SK-N-SH (cell line): ENCODE measurements at regions of chr13 and their contacts with region 1.

Region 1: GRCh38 chr13:52968074-52968700 is 60.4 kb upstream of the OLFM4 start:
- DNase-seq: peak; percentile 71
- H3K4me3 ChIP-seq: no peak overlapping the region; a peak in 1 of 4 replicates
- H3K27ac ChIP-seq: no peak overlapping the region
- H3K4me1 ChIP-seq: no peaks in the 10 kb centered on the region
- H3K27me3 ChIP-seq: no peaks in the 10 kb centered on the region
- CTCF ChIP-seq: peak; percentile 96
- EP300 ChIP-seq: no peak
- RAD21 ChIP-seq: peak; percentile 83

Region 2: DNA sequence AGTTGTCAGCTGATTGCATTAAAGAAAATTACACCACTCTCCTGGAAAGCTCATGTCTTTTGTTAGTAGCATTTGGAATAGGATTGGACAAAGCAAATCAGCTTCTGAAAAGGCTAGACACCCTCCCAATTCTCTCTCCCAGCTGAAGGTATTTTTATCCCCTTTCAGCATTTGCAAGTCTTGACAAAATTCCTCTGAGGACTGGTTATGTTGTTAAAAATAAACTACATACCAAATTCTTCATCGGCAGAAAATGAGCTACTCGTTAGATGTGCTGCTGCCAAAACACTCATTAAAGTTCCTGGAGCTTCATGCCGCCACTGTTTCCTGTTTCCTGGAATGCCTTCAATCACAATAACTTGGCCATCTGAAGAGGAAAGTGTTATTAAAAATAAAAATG is 906.6 kb before region 1 on chr13:
- CTCF ChIA-PET with region 1: no interaction called
- POLR2A ChIA-PET with region 1: no interaction called
- DNase-seq: no peak
- H3K4me3 ChIP-seq: no peak overlapping the region; a peak in 1 of 4 replicates
- H3K27ac ChIP-seq: no peak overlapping the region; a peak in 1 of 4 replicates
- H3K4me1 ChIP-seq: no peaks in the 10 kb centered on the region
- H3K27me3 ChIP-seq: no peaks in the 10 kb centered on the region
- CTCF ChIP-seq: no peak
- EP300 ChIP-seq: no peak
- RAD21 ChIP-seq: no peak

Region 3: GRCh38 chr13:52665325-52665724 is 302.9 kb before region 1 on chr13:
- CTCF ChIA-PET with region 1: interaction called, 33 read pairs
- POLR2A ChIA-PET with region 1: no interaction called
- DNase-seq: peak; percentile 22
- H3K4me3 ChIP-seq: no peak overlapping the region
- H3K27ac ChIP-seq: no peak overlapping the region
- H3K4me1 ChIP-seq: no peaks in the 10 kb centered on the region; a peak in 1 of 4 replicates
- H3K27me3 ChIP-seq: no peaks in the 10 kb centered on the region
- CTCF ChIP-seq: peak; percentile 67
- EP300 ChIP-seq: no peak
- RAD21 ChIP-seq: peak; percentile 59

Region 4: DNA sequence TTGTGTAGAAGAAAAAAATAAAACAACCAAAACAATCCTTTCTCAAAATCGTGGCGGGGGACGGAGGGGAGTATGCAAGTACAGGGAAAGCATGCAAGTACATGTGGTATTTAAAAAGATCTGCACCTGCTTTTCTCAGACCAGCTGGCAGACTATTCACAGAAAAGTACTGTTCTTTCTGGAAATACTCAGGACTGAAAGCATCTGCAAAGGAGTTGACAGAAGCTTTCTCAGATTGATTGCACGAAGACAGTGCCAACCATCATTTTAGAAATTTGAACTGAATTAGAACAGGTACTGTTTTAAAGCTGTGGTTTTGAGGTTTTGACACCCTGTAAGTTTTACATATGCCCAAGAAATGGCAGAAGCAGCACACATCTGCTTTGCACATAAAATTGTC is 100.0 kb before region 1 on chr13:
- CTCF ChIA-PET with region 1: interaction called, 44 read pairs
- POLR2A ChIA-PET with region 1: interaction called, 3 read pairs
- DNase-seq: no peak
- H3K4me3 ChIP-seq: no peak overlapping the region
- H3K27ac ChIP-seq: no peak overlapping the region
- H3K4me1 ChIP-seq: no peaks in the 10 kb centered on the region
- H3K27me3 ChIP-seq: no peaks in the 10 kb centered on the region
- CTCF ChIP-seq: no peak
- EP300 ChIP-seq: no peak
- RAD21 ChIP-seq: no peak

Region 5: DNA sequence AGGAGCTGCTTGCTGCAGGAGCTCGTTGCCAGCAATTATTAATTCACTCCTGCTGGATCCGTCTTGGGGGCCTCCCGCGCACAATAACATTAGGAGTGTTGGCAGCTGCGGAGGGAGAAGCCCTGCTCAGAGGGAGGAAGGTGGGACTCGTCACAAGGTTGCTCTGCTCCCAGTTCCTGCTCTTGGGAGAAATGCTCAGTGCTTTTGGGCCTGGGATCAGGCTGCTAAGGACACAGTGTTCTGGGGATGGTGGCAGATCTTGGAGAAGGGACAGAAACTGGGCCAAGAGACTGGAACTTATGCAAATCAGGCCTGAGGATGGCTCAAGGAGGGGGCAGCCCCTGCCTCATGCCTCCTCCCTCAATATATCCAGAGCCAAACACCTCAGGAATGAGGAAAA is 18.4 kb before region 1 on chr13:
- CTCF ChIA-PET with region 1: interaction called, 76 read pairs
- POLR2A ChIA-PET with region 1: no interaction called
- DNase-seq: no peak
- H3K4me3 ChIP-seq: no peak overlapping the region
- H3K27ac ChIP-seq: no peak overlapping the region
- H3K4me1 ChIP-seq: no peaks in the 10 kb centered on the region
- H3K27me3 ChIP-seq: no peaks in the 10 kb centered on the region
- CTCF ChIP-seq: no peak
- EP300 ChIP-seq: no peak
- RAD21 ChIP-seq: no peak

Region 6: GRCh38 chr13:53042877-53043276 is 74.7 kb after region 1 on chr13:
- CTCF ChIA-PET with region 1: interaction called, 10 read pairs
- POLR2A ChIA-PET with region 1: no interaction called
- DNase-seq: no peak
- H3K4me3 ChIP-seq: no peak overlapping the region
- H3K27ac ChIP-seq: no peak overlapping the region
- H3K4me1 ChIP-seq: peaks cover 0 to 8% of the 10 kb centered on the region in 2 experiments; a peak in 2 of 4 replicates
- H3K27me3 ChIP-seq: no peaks in the 10 kb centered on the region
- CTCF ChIP-seq: no peak
- EP300 ChIP-seq: no peak
- RAD21 ChIP-seq: no peak

Region 7: DNA sequence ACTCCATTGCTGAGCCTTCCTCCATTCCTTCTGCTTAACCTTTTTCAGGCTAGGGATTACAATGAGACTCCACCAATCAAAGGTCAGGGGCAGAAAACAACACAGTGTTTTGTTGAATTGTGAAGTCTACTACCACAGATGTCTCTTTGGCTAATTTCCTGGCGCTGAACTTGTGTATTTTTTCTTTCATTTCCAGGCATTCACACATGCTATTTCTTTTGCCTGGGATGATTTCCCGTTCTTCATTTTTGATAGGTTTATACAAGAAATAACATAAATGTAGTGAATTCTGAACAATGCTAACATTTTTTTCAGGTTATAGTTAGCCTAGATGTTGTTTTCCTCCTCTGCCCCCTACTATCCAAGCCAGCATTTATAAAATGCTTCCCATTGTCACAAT is 124.7 kb after region 1 on chr13:
- CTCF ChIA-PET with region 1: interaction called, 10 read pairs
- POLR2A ChIA-PET with region 1: no interaction called
- DNase-seq: no peak
- H3K4me3 ChIP-seq: no peak overlapping the region
- H3K27ac ChIP-seq: no peak overlapping the region
- H3K4me1 ChIP-seq: peaks cover 0 to 2% of the 10 kb centered on the region in 2 experiments; a peak in 1 of 4 replicates
- H3K27me3 ChIP-seq: no peaks in the 10 kb centered on the region
- CTCF ChIP-seq: no peak
- EP300 ChIP-seq: no peak
- RAD21 ChIP-seq: no peak

Region 8: GRCh38 chr13:53321296-53321801 is 353.2 kb after region 1 on chr13:
- CTCF ChIA-PET with region 1: no interaction called
- POLR2A ChIA-PET with region 1: no interaction called
- DNase-seq: no peak
- H3K4me3 ChIP-seq: no peak overlapping the region
- H3K27ac ChIP-seq: no peak overlapping the region
- H3K4me1 ChIP-seq: no peaks in the 10 kb centered on the region
- H3K27me3 ChIP-seq: no peaks in the 10 kb centered on the region
- CTCF ChIP-seq: no peak
- EP300 ChIP-seq: no peak
- RAD21 ChIP-seq: no peak